Transverse colon (tissue), 4 donors: ENCODE measurements at regions of chr11 and their contacts with region 1.

Region 1: DNA sequence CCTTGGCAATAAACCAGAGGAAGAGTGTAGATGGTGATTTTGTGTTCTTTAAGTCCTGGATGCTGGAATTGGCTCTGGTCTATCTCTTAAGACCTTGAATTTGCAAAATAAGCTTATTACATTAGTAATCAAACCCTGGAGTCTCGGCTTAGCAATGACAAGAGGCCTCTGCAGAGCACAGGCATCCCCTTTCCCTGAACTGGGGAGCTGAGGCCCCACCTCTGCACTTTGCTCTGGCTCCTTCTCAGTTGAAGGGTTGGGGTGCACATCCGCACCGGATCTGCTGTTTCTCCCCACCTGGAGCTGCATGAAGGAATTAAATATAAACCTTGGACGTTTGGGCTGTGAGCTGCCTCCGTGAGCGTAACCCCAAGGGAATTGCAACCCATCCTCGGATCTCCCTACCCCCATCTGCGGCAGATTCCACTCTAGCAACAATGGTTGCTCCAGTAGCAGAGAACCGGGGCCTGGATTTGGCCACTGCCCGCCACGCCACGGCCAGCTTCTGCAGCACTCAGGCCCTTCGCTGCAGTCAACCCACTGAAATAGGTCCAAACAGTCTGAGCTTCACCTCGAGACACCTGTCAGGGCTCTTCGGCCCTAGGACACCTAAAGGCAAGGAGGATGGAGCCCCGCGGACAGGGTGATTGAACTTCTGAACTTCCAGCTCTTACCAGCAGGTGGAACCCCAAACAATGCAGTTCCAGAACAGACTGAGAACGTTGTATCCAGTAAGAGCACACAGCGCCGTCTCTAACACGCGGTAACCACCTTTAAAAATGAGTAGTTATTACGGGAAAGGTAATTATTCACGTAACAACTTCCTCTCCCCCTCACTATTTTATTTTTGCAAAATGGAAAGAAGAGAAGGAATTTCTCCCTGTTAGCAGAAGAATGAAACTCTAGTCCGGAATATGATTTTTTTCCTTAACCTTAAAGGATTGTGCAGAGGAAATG is 54.8 kb upstream of the CAPRIN1 start:
- DNase-seq: peak; percentile 82
- H3K4me3 ChIP-seq: no peak overlapping the region
- H3K27ac ChIP-seq: no peak overlapping the region
- H3K4me1 ChIP-seq: peaks cover 0 to 12% (median 1%) of the 10 kb centered on the region in 4 donors
- H3K27me3 ChIP-seq: peaks cover 12% of the 10 kb centered on the region
- CTCF ChIP-seq: peak; percentile 79 to 88 (median 85)
- EP300 ChIP-seq: no peak
- POLR2A ChIP-seq: no peak

Region 2: DNA sequence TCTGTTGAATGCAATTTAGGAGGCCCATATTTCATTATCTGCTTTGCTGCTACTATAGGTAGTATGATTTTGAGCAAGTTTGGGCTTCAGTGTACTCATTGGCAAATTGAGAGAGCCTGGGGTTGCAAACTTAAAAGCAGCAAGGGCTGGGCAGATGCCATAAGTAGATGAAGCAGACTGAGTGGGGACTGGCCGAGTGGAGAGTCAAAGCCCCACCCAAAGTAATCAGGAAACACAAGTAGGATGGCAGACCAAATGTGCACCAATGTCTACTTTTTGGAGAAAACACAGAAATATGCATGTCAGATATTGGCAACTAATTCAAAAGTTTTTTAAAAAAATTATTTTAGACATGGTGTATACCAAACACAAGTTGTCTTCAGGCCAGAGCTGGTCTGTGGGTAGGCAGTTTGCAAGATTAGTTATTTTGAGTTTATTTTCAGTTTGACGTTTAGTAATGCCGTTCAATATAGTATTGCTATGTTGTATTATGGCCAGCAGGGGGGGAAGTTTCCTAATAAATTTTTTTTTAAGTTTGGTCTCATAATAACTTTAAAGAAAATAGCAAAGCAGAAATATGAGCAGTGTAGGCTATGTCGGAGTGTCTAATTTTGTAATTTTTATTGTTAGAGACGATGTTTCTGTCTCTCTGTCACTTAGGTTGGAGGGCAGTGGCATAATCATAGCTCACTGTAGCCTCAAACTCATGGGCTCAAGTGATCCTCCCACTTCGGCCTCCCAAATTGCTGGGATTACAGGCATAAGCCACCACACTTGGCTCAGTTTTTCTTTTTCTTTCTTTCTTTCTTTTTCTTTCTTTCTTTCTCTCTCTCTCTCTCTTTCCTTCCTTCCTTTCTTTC is 634.5 kb before region 1 on chr11:
- in situ Hi-C with region 1: loop called in 1 of 4 experiments (anchors 25 kb)
- intact Hi-C with region 1: no loop called
- DNase-seq: no peak
- H3K4me3 ChIP-seq: no peak overlapping the region
- H3K27ac ChIP-seq: no peak overlapping the region
- H3K4me1 ChIP-seq: peaks cover 0 to 4% (median 1%) of the 10 kb centered on the region in 4 donors
- H3K27me3 ChIP-seq: peaks cover 8% of the 10 kb centered on the region
- CTCF ChIP-seq: peak; percentile 65 to 78 (median 68)
- EP300 ChIP-seq: no peak
- POLR2A ChIP-seq: no peak

Region 3: DNA sequence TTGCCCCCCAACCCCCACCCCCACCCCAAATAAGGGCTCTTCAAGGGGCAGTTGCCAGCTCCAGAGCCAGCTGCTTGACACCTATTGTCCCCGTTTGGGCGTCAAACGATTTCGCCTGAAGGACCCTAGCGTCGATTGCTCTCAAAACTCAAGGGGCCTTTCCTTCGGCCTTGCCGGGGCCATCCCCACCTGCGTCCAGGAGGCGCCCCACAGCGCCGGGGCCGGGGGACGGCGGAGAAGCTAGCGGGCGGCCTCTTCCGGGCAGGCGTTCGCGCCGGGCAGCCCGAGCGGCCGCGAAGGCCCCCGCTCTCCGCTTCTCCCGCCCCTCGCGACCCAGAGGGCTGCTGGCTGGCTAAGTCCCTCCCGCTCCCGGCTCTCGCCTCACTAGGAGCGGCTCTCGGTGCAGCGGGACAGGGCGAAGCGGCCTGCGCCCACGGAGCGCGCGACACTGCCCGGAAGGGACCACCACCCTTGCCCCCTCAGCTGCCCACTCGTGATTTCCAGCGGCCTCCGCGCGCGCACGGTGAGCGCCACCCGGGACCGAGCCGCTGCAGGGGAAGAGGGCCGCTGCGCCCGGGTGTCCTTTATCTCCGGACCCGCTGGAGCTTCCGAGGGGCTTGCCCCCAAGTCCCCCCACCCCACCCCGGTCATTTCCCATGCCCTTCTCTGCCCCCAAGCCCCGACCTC is 54.7 kb after region 1 on chr11 and contains the start of gene CAPRIN1:
- in situ Hi-C with region 1: loop called in 1 of 4 experiments (anchors 10 kb)
- intact Hi-C with region 1: no loop called
- DNase-seq: peak; percentile 89
- H3K4me3 ChIP-seq: peak within 1 kb of the TSS; percentile 90 to 98 (median 94)
- H3K27ac ChIP-seq: peak within 1 kb of the TSS; percentile 99 to 100 (median 99)
- H3K4me1 ChIP-seq: peaks cover 20 to 39% (median 37%) of the 10 kb centered on the region in 4 donors
- H3K27me3 ChIP-seq: no peaks in the 10 kb centered on the region
- CTCF ChIP-seq: no peak
- EP300 ChIP-seq: no peak
- POLR2A ChIP-seq: peak; percentile 91
- total RNA-seq, gene CAPRIN1: 129 to 163 (median 152) TPM

Region 4: DNA sequence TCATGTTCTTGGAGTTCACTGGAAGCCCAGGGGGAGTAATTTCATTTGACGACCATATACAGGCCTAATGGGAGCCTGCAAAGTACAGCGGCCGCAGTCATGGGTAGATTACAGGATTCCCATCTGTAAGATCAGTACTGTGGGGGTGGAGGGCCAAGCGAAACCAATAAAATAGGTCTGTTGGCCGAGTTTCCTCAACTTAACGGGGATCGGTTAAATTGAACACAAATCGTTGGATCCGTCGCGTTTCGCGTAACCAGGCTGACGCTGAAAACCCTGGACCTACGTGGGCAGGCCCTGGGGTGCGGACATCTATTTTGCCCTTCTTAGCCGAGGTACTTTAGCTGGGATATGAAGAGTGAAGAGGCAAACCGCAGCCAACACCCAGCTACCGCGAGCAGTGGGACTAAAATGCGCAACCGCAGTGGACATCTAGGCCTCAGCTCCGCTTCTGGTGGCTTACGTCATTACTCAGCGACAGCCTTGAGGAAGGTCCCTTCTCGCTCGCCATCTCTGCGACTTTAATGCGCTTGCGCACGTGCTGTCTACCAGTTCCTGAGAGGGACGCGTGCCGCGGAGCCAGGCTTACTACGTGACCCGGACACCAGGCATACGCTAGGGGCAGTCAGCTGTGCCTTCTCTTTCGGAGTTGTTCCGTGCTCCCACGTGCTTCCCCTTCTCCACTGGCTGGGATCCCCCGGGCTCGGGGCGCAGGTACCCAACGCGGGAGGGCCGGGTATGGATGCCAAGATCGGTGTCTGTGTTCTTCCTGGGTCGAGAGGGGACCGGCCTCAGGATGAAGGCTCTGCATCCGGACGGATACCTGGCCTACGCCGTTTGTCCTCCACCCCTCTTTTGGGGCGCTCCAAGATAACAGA is 108.5 kb after region 1 on chr11 and contains the start of gene NAT10:
- in situ Hi-C with region 1: loop called in 1 of 4 experiments (anchors 5 kb)
- intact Hi-C with region 1: no loop called
- DNase-seq: peak; percentile 98
- H3K4me3 ChIP-seq: peak within 1 kb of the TSS; percentile 41 to 93 (median 75)
- H3K27ac ChIP-seq: peak within 1 kb of the TSS; percentile 90 to 96 (median 92)
- H3K4me1 ChIP-seq: peaks cover 7 to 24% (median 18%) of the 10 kb centered on the region in 4 donors
- H3K27me3 ChIP-seq: no peaks in the 10 kb centered on the region
- CTCF ChIP-seq: peak in 3 of 5 experiments; percentile 14 to 50 (median 31)
- EP300 ChIP-seq: no peak
- POLR2A ChIP-seq: peak; percentile 93
- total RNA-seq, gene NAT10: 16.0 to 40.6 (median 26.9) TPM

Region 5: DNA sequence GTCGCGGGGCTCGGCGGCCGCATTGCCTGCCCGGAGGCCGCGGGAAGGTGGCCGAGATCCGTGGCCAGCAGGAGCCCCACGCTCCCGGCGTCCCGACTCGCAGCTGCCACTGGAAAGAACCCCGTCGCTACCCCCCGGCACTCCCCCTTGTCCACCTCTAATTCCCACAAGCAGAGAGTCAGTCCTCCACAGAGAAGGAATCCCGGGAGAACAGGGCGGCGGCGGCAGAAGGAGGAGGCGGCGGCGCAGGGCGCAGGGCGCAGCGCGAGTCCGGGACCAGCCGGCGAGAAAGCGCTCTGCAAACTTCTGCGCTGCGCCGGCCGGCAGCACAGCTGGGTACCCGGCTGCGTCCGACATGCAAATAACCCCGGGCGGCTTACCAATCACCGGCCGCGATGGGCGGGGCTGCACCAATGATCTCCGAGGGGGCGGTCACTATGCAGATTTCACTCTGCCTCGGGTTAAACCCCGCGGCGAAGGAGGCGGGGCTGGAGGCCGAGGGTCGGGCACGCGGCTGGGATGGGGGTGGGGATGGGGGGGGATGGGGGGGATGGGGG is 361.0 kb after region 1 on chr11 and contains the start of gene ABTB2:
- in situ Hi-C with region 1: loop called (anchors 5 to 25 kb)
- intact Hi-C with region 1: no loop called
- DNase-seq: peak; percentile 99
- H3K4me3 ChIP-seq: peak within 1 kb of the TSS; percentile 41 to 62 (median 47)
- H3K27ac ChIP-seq: peak within 1 kb of the TSS; percentile 76 to 91 (median 84)
- H3K4me1 ChIP-seq: peaks cover 13 to 26% (median 22%) of the 10 kb centered on the region in 4 donors
- H3K27me3 ChIP-seq: peaks cover 15% of the 10 kb centered on the region
- CTCF ChIP-seq: no peak
- EP300 ChIP-seq: no peak
- POLR2A ChIP-seq: peak; percentile 96
- total RNA-seq, gene ABTB2: 0.60 to 41.9 (median 20.7) TPM

Region 6: DNA sequence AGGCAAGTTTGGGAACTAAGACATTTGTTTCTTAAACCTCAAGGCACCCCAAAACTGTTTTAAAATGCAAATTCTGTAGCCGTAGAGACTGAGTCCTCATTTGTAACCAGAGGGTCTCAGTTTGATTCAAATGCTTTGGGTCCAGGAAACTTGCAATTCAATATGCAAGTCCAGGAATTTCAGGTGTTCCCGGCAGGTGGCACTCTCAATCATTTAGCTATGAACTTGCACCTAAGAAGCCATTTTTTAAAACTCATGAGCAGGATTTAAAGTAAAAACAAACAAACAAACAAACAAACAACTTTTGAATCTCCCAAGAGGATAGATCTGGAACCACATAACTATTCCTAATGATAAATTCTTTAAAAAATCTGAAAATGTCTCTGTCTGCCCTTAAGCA is 369.7 kb after region 1 on chr11:
- in situ Hi-C with region 1: loop called (anchors 5 to 25 kb)
- intact Hi-C with region 1: no loop called
- DNase-seq: peak; percentile 35
- H3K4me3 ChIP-seq: no peak overlapping the region
- H3K27ac ChIP-seq: no peak overlapping the region
- H3K4me1 ChIP-seq: no peaks in the 10 kb centered on the region
- H3K27me3 ChIP-seq: no peaks in the 10 kb centered on the region
- CTCF ChIP-seq: peak; percentile 12 to 40 (median 31)
- EP300 ChIP-seq: no peak
- POLR2A ChIP-seq: no peak